ENCODE measurements at regions of chr2 and their contacts with region 1.

Region 1: GRCh38 chr2:10408649-10409579 is 39.2 kb downstream of the ODC1 start:
- H3K4me3 ChIP-seq: no peak overlapping the region
- H3K27ac ChIP-seq: no peak overlapping the region
- H3K4me1 ChIP-seq: no peaks in the 10 kb centered on the region
- CTCF ChIP-seq: peak; percentile 91

Region 2: DNA sequence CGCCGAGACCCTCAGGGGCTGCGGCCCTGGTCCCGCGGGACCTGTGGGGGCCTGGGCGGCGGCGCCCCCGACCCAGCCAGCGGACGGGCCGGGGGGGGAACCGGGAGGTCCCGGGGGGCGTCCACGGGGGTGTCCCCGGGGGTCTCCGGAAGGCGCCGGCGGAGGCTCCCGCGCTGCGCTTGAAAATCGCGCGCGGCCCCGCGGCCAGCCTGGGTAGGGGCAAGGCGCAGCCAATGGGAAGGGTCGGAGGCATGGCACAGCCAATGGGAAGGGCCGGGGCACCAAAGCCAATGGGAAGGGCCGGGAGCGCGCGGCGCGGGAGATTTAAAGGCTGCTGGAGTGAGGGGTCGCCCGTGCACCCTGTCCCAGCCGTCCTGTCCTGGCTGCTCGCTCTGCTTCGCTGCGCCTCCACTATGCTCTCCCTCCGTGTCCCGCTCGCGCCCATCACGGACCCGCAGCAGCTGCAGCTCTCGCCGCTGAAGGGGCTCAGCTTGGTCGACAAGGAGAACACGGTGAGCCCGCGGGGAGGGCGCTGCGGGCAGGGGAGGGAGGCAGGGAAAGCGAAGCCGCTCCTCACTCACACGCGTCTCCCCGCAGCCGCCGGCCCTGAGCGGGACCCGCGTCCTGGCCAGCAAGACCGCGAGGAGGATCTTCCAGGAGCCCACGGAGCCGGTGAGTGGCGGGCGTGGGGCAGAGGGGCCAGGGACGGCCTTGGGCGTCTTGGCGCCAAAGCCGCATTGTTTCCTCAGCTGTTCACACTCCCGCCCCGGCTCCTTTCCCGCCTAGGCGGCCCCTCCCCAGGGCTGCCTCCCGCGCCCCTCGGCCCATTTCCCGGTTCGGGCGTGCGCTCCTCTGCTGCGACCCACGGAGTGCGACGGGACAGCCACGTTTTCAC is 286.3 kb before region 1 on chr2 and contains the start of gene RRM2:
- CTCF ChIA-PET with region 1: interaction called, 71 read pairs
- POLR2A ChIA-PET with region 1: no interaction called
- H3K4me3 ChIP-seq: peak within 1 kb of the TSS; percentile 70
- H3K27ac ChIP-seq: peak within 1 kb of the TSS; percentile 97
- H3K4me1 ChIP-seq: peaks cover 5% of the 10 kb centered on the region; the same call in 1 of the 2 replicates
- CTCF ChIP-seq: peak; percentile 87

Region 3: DNA sequence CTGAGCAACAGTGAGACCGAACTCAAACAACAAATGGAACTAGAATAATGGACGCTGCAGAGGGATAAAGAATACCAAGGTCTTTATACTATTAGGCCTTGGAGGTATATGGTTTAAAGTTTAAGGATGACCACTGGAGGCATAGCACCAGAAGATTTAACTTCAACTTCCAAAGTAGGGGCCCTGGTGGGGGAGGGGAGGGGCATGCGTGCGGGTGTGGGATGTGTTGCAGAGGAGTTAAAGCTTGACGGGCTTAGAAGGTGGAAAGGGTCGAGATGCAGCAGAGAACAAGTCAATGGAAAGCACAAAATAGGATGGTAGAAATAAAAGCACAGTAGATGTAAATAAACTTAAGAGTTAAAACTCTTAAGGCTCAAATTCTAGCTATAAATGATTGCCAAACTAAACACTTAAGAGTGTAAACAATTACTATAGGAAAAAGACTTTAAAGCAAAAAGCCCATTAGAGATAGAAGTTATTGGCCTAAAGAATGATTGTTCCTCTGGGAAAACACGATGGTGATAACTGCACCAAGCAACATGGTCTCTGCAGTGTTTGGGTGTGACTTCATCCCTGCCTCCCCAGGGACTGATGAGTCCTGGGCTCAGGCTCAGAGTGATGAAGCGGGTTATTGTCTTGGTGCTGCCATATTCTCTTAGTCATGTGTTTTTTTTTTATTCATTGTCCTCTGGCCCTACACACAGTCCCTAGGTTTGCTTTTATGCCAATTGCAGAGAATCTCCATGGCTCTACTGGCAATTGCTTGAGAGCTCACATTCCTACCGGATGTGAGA is 273.4 kb before region 1 on chr2:
- CTCF ChIA-PET with region 1: interaction called, 24 read pairs
- POLR2A ChIA-PET with region 1: interaction called, 3 read pairs
- H3K4me3 ChIP-seq: no peak overlapping the region
- H3K27ac ChIP-seq: 0 out of 2 replicates have a peak overlapping the region, but pooled peaks have one; percentile 11
- H3K4me1 ChIP-seq: peaks cover 8% of the 10 kb centered on the region; the same call in 1 of the 2 replicates
- CTCF ChIP-seq: no peak

Region 4: GRCh38 chr2:10141736-10142642 is 266.9 kb before region 1 on chr2:
- CTCF ChIA-PET with region 1: interaction called, 17 read pairs
- POLR2A ChIA-PET with region 1: no interaction called
- H3K4me3 ChIP-seq: no peak overlapping the region
- H3K27ac ChIP-seq: no peak overlapping the region
- H3K4me1 ChIP-seq: no peaks in the 10 kb centered on the region
- CTCF ChIP-seq: peak; percentile 68

Region 5: GRCh38 chr2:10172033-10172871 is 236.7 kb before region 1 on chr2:
- CTCF ChIA-PET with region 1: no interaction called
- POLR2A ChIA-PET with region 1: no interaction called
- H3K4me3 ChIP-seq: no peak overlapping the region
- H3K27ac ChIP-seq: no peak overlapping the region
- H3K4me1 ChIP-seq: no peaks in the 10 kb centered on the region
- CTCF ChIP-seq: no peak

Region 6: GRCh38 chr2:10302479-10303180 is 106.3 kb before region 1 on chr2 and contains the start of gene HPCAL1:
- CTCF ChIA-PET with region 1: interaction called, 12 read pairs
- POLR2A ChIA-PET with region 1: no interaction called
- H3K4me3 ChIP-seq: peak within 1 kb of the TSS; percentile 77
- H3K27ac ChIP-seq: peak within 1 kb of the TSS; percentile 56; the same call in 1 of the 2 replicates
- H3K4me1 ChIP-seq: 0 out of 2 replicates have a peak, but pooled peaks cover 4% of the 10 kb centered on the region
- CTCF ChIP-seq: peak; percentile 63; the same call in 1 of the 2 replicates

Region 7: GRCh38 chr2:10424051-10424450 is 15.1 kb after region 1 on chr2:
- CTCF ChIA-PET with region 1: interaction called, 13 read pairs
- POLR2A ChIA-PET with region 1: no interaction called
- H3K4me3 ChIP-seq: no peak overlapping the region
- H3K27ac ChIP-seq: no peak overlapping the region
- H3K4me1 ChIP-seq: no peaks in the 10 kb centered on the region
- CTCF ChIP-seq: no peak

Region 8: GRCh38 chr2:10460366-10460796 is 51.5 kb after region 1 on chr2:
- CTCF ChIA-PET with region 1: no interaction called
- POLR2A ChIA-PET with region 1: no interaction called
- H3K4me3 ChIP-seq: no peak overlapping the region
- H3K27ac ChIP-seq: no peak overlapping the region
- H3K4me1 ChIP-seq: no peaks in the 10 kb centered on the region
- CTCF ChIP-seq: no peak